Transverse colon (tissue), 4 donors: ENCODE measurements at regions of chr7 and their contacts with region 1.

Region 1: DNA sequence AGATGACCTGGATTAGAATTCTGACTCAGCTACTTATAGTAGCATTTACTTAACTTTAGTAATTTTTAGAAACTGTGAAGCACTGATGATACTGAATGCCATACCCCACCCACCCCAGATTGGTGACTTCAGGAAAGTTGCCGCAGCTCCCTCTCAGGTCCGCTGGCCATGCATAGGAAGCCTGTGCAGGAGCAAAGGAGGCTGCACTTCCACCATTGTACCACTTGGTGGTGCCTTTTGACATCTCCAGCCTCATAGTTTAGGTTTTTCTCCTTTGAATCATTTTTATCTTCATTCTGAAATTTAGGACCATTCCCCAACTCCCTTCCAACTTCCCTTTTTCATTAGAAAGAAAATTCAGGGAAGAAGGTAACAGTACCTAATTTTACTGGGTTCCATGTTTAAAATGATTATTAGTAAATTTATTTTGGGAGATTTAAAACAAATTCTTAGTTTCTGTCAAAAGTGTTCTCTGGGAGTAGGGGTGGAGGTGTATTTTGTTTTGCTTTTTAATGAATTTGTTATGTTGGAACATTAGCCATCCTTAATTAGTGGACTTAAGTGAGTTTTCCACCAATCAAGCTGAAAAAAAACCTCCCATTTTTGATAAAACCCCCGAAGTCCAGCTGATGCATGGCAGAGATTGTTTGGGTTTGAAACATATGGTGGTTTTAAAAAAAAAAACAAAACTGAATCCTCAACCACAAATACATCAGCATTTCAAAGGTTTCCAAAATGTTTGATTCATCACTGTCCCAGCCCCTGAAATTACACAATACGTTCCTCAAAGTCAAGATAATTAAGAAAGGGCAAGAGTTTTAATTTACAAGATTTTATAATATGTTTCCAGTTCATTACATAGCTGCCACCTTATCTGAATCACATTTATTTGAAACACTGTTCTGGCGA is 109.6 kb downstream of the WNT2 start:
- DNase-seq: peak; percentile 43
- H3K4me3 ChIP-seq: no peak overlapping the region
- H3K27ac ChIP-seq: no peak overlapping the region
- H3K4me1 ChIP-seq: no peaks in the 10 kb centered on the region
- H3K27me3 ChIP-seq: no peaks in the 10 kb centered on the region
- CTCF ChIP-seq: peak; percentile 66 to 88 (median 83)
- EP300 ChIP-seq: no peak
- POLR2A ChIP-seq: no peak

Region 2: DNA sequence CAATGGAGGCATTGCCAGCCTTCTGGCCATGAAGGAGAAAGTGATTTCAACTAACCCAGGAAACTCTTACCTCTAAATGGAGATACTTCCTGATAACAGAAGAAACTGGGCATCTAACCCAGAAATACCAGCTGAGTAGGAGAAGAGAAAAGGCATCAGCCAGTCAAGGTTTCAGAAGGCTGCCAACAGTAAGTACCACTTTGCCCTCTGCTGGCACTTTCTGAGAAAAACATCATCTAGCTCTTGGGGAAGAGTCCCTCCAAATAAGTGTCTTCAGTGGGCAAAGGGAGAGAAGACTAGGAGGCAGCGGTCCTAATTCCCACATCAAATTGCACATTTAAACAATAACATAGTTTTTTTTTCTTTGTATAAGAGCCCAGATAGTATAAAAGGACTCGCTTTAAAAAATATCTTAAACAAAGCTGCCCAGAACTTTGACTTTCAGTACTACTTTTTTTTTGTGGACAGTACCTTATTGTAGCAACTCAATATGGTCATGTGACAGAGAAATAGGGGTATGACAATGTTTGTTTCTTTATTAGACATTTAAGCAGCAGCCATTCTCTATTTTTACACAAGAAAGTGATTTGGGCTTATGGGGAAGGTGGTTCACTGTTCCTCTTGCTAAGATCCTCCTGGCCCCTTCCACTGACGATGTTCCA is 502.7 kb after region 1 on chr7:
- in situ Hi-C with region 1: loop called in 1 of 4 experiments (anchors 25 kb)
- intact Hi-C with region 1: no loop called
- DNase-seq: peak; percentile 35
- H3K4me3 ChIP-seq: no peak overlapping the region
- H3K27ac ChIP-seq: no peak overlapping the region
- H3K4me1 ChIP-seq: peaks cover 0 to 8% (median 2%) of the 10 kb centered on the region in 4 donors
- H3K27me3 ChIP-seq: no peaks in the 10 kb centered on the region
- CTCF ChIP-seq: peak; percentile 34 to 72 (median 50)
- EP300 ChIP-seq: no peak
- POLR2A ChIP-seq: no peak

Region 3: DNA sequence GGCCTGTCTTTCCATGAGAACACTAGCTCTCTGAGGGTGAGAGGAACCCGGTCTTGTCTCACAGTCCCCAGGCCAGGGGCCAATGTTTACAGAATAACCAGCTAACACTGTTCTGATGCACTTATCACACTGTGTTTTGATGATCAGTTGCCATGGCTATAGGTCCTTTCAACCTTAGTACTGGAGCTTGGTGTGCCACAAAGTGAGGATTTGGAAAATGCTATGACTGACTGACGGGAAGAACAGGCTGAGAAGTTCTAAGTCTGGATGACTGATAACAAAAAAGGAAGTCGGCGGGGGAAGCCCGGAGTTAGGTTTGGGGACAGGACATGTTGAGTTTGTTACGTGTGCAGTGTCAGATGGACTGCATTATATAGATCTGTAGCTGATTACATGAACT is 518.2 kb after region 1 on chr7:
- in situ Hi-C with region 1: loop called in 1 of 4 experiments (anchors 25 kb)
- intact Hi-C with region 1: no loop called
- DNase-seq: no peak
- H3K4me3 ChIP-seq: no peak overlapping the region
- H3K27ac ChIP-seq: no peak overlapping the region
- H3K4me1 ChIP-seq: no peaks in the 10 kb centered on the region
- H3K27me3 ChIP-seq: no peaks in the 10 kb centered on the region
- CTCF ChIP-seq: no peak
- EP300 ChIP-seq: no peak
- POLR2A ChIP-seq: no peak

Region 4: DNA sequence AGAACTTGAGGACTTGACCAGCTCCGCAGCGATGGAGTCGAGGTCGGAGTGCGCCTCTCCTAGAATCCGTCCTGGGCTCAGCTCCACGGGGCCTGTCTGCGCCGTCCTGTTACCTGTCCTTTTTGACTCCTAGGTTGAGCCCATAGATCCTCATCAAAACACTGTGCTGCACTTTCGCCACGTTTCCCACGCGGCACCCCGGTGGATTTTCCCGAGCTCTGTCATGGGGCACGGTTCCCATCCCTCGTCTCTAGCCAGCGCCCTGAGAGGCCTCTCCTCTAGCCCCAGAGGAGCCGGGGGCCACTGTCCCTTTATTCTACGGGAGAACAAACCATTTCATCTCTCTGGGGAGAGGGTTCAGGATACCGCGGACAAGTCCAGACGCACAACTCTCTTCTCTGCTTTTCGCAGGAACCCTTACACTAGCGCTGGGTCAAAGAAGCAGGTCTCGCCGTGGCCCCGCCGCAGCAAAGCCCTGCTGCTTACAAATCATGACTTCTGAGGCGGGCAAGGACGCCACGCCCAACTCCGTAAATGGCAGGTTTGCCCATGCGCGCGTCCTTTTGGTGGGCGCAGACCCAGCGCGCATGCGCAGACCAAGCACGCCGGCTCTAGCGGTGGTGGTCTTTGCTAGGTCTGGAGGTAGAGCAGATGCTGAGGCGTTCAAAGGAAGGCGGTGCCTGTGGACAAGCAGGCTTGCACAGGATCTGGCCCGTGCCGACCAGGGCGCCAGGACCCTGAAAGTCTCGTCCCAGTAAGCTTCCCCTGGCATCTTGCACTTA is 1001.0 kb after region 1 on chr7:
- in situ Hi-C with region 1: loop called in 1 of 4 experiments (anchors 25 kb)
- intact Hi-C with region 1: no loop called
- DNase-seq: peak; percentile 62
- H3K4me3 ChIP-seq: peak overlapping the region; percentile 13 to 60 (median 35)
- H3K27ac ChIP-seq: peak overlapping the region; percentile 28 to 58 (median 38)
- H3K4me1 ChIP-seq: peaks cover 0 to 8% (median 0%) of the 10 kb centered on the region in 4 donors
- H3K27me3 ChIP-seq: no peaks in the 10 kb centered on the region
- CTCF ChIP-seq: no peak
- EP300 ChIP-seq: no peak
- POLR2A ChIP-seq: no peak